GM13977 (cell line): ENCODE measurements at regions of chr14 and their contacts with region 1.

Region 1: GRCh38 chr14:80987235-80988032 is 32.0 kb downstream of the TSHR start:
- DNase-seq: peak; percentile 76
- CTCF ChIP-seq: peak; percentile 89

Region 2: DNA sequence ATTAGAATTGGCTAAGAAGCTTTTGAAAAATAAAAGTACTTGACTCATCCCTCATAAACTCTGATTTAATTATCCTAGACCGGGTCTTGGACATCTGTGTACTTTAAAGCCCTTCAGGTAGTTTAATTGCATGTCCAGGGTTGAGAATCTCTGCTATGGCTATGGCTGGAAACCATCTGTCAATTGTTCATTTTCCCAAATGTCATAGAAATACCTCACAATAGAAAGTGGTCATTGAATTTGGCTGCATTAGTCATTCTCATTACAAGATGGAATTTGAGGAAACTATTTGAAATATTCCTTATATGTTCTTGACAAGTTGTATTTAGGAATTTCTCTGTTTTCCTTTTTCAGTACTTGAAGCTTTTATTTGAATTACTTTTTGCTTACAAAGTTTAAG is 79.2 kb after region 1 on chr14:
- in situ Hi-C with region 1: no loop called
- DNase-seq: no peak
- CTCF ChIP-seq: no peak

Region 3: GRCh38 chr14:81085596-81085995 is 98.2 kb after region 1 on chr14:
- in situ Hi-C with region 1: no loop called
- DNase-seq: no peak
- CTCF ChIP-seq: no peak

Region 4: GRCh38 chr14:81147140-81147897 is 159.9 kb after region 1 on chr14:
- in situ Hi-C with region 1: no loop called
- DNase-seq: no peak
- CTCF ChIP-seq: no peak

Region 5: GRCh38 chr14:81164167-81164774 is 176.8 kb after region 1 on chr14:
- in situ Hi-C with region 1: loop called (anchors 10 kb)
- DNase-seq: peak; percentile 56
- CTCF ChIP-seq: peak; percentile 94

Region 6: GRCh38 chr14:81200054-81200453 is 212.6 kb after region 1 on chr14:
- in situ Hi-C with region 1: no loop called
- DNase-seq: no peak
- CTCF ChIP-seq: no peak